Esophagus muscularis mucosa (tissue), 4 donors: ENCODE measurements at regions of chr19 and their contacts with region 1.

Region 1: DNA sequence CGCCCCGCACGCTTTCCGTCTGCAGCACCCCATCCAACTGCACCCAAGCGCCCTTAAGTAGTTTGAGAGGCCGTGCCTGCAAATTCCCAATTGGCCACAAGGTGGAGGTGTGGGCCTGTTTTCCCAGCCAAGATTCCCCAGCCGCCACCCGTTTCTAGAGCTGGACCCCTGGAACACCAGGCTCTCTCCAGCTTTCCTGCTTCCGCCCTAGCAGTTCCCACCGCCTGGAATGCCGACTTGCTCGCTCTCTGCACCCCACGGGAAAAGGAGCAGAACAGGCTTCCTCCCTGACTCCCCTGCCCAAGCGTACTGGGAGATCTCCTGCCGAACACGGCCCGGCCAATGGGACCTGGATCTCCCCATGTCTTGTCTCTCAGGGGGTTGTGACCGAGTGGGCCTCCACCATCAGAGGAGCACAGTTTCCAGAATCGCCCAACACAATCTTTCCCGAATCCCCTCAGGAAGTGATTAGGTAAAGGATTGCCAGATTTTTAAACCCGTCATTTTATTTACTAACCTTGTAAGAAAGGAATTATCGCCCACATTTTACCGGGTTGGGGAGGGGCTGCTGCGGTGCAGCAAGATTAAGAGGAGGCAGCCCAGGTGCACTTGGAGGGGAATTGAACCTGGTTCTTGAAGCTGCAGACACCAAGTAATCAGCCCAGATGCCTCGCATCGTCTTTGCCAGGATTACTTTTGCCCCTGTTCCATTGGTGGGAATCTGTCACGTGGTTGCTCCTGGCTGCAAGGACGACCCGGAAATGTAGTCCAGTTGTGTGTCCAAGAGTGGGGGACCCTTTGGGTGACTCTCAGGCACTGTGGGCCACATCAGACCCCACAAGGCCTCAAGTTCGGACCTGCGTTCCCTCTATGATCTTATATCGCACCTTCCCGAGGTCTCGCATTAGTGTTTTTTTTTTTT is 3.5 kb upstream of the NAPSA start:
- DNase-seq: peak; percentile 97
- H3K4me3 ChIP-seq: peak overlapping the region; percentile 57 to 70 (median 63)
- H3K27ac ChIP-seq: peak overlapping the region; percentile 69 to 81 (median 76)
- H3K4me1 ChIP-seq: peaks cover 0 to 13% (median 5%) of the 10 kb centered on the region in 4 donors
- H3K27me3 ChIP-seq: no peaks in the 10 kb centered on the region
- CTCF ChIP-seq: peak; percentile 89 to 94 (median 92)
- EP300 ChIP-seq: no peak
- POLR2A ChIP-seq: no peak

Region 2: DNA sequence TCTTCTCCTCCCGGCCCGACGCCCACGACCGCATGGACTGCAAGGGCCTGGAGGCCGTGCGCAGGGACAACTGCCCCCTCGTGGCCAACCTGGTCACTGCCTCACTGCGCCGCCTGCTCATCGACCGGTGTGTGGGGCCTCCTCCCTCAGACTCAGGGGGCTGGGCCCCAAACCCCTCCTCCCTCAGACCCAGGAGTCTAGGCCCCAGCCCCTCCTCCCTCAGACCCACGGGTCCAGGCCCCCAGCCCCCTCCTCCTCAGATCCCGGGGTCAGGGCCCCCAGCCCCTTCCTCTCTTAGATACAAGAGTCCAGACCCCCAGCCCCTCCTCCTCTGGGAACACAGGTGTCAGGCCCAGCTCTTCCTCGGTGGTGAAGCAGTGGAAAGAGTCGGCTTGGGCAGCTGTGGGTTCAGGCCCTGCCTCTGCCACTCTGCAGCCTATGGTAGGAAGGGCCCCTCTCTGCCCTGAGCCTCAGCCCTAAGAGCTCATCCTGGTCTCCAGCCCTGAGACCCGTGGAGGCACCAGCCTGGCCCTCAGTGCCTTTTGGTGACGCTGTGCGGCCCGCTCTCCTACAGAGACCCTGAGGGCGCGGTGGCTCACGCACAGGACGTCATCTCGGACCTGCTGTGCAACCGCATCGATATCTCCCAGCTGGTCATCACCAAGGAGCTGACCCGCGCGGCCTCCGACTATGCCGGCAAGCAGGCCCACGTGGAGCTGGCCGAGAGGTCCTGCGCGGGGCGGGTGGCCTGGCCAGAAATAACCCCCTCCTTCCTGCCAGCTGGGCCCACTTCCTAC is 46.2 kb after region 1 on chr19:
- intact Hi-C with region 1: loop called (anchors 5 kb)
- DNase-seq: no peak
- H3K4me3 ChIP-seq: no peak overlapping the region
- H3K27ac ChIP-seq: no peak overlapping the region
- H3K4me1 ChIP-seq: peaks cover 4 to 22% (median 13%) of the 10 kb centered on the region in 4 donors
- H3K27me3 ChIP-seq: peaks cover 0 to 40% (median 27%) of the 10 kb centered on the region in 4 donors
- CTCF ChIP-seq: peak; percentile 78 to 97 (median 83)
- EP300 ChIP-seq: no peak
- POLR2A ChIP-seq: no peak

Region 3: DNA sequence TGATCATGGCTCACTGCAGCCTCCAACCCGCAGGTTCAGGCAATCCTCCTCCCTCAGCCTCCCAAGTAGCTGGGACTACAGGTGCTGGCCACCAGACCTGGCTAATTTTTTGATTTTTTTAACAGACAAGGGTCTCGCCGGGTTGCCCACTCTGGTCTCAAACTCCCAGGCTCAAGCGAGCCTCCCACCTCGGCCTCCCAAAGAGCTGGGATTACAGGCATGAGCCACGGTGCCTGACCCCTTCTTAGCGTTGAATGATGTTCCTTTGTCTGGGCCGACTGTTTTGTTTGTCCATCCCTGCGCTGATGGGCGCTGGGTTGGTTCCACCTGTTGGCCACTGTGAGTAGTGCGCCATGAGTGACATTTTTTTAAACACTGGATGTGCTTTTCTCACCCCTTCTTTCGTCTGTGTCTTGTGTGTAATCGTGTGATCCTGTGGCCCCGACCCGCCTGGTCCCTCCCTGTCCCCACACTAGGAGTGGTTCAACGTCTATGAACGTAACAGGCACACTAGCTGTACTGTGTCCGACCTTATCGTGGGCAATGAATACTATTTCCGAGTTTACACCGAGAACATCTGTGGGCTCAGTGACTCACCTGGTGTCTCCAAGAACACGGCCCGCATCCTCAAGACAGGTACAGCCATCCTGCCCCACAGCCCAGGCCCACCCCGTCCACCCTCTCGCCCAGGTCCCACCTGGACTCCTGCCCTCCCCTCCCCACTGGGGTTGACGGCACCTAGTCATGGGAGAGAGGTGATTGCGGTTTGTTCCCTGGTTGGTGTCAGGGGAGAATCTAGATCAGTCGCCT is 92.4 kb after region 1 on chr19:
- intact Hi-C with region 1: loop called (anchors 2 kb)
- DNase-seq: no peak
- H3K4me3 ChIP-seq: no peak overlapping the region
- H3K27ac ChIP-seq: no peak overlapping the region
- H3K4me1 ChIP-seq: no peaks in the 10 kb centered on the region
- H3K27me3 ChIP-seq: peaks cover 0 to 85% (median 20%) of the 10 kb centered on the region in 4 donors
- CTCF ChIP-seq: peak; percentile 66 to 81 (median 67)
- EP300 ChIP-seq: no peak
- POLR2A ChIP-seq: no peak